ENCODE measurements at regions of chr9 and their contacts with region 1.

Region 1: DNA sequence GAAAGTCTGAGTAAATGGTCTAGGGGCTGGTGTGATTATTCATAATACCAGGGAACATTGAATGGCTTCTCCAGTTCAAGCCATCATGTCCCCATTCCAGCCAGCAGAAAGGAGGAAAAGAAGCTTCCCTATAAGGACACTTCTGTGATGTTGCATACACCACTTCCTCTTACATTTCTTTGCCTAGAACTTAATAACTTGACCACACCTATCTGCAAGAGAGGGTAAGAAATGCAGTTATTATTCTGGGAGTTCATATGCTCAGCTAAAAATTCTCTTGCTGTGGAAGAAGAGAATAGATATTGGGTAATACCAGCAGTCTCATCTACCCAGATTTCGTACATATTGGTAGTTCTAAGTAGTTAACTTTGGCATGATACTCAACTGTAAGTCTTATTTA is 166.1 kb downstream of the SLC28A3 start:
- DNase-seq: no peak
- H3K4me3 ChIP-seq: no peak overlapping the region
- CTCF ChIP-seq: no peak

Region 2: DNA sequence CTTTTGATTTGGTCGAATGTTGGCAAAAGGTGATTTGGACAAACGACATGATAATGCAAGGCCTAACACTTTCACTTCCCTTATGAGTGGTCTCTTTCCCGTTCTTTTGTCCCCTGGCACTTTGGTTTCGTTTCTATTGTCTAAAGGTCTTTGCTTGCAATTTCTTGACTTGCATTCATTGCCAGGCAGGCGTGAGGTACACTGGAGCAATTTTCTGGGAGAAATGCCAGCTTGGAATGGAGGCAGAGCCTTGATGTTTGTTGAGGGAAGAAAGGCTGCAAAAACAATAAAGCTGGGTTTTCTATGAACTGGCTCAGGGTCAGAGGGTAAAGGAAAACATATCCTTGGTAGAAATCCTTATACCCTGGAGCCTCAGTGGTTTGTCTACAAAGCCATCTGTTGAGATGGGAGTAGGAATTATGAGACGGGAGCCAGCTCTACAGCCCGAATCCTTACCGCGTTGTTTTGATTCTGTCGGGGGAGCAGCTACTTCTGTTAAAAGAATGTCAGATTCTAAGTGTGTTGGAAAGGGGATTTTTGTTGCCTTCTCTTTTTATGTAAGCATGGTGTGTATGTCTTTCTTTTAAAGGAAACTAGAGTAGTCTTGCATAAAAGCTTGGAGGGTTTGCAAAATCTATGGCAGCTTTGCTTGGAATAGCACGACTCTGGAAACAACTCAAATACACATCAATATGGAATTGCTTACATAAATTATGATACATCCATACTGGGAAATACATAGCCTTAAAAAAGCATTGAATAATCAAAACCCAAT is 35.0 kb before region 1 on chr9:
- CTCF ChIA-PET with region 1: interaction called, 13 read pairs
- POLR2A ChIA-PET with region 1: no interaction called
- DNase-seq: no peak
- H3K4me3 ChIP-seq: no peak overlapping the region
- CTCF ChIP-seq: no peak

Region 3: GRCh38 chr9:84146893-84147710 is 27.4 kb before region 1 on chr9:
- CTCF ChIA-PET with region 1: interaction called, 18 read pairs
- POLR2A ChIA-PET with region 1: no interaction called
- DNase-seq: no peak
- H3K4me3 ChIP-seq: no peak overlapping the region
- CTCF ChIP-seq: no peak

Region 4: GRCh38 chr9:84154320-84154719 is 20.2 kb before region 1 on chr9:
- CTCF ChIA-PET with region 1: interaction called, 20 read pairs
- POLR2A ChIA-PET with region 1: no interaction called
- DNase-seq: no peak
- H3K4me3 ChIP-seq: no peak overlapping the region
- CTCF ChIP-seq: no peak

Region 5: DNA sequence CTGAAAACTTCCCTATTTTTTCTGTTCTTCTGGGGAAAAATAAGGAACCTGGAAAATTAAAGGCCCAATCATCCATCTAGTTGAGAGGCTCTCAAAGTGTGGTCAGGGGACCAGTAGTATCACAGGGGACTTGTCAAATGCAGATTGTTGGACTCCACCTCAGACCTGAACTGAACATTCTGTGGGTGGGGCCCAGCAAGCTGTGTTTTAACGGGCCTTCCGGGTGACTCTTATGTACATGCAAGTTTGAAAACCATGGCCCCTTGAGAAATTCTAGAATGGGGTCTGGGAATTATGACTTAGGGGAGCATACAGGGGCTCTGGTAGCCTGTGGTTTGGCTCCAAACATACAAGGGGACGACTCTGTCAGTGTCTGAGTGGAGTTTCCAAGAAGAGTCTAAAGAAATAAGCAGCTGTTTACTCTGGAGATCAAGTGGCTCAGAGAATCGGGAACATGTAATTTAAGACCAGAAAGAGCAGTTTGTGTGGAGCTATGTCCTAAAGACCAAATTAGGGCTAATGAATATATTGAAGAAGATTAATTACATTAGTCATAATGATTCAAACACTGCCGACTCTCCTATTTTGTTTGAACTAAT is 11.3 kb before region 1 on chr9:
- CTCF ChIA-PET with region 1: interaction called, 33 read pairs
- POLR2A ChIA-PET with region 1: no interaction called
- DNase-seq: no peak
- H3K4me3 ChIP-seq: no peak overlapping the region
- CTCF ChIP-seq: no peak

Region 6: GRCh38 chr9:84187090-84187489 is 12.6 kb after region 1 on chr9:
- CTCF ChIA-PET with region 1: interaction called, 79 read pairs
- POLR2A ChIA-PET with region 1: interaction called, 4 read pairs
- DNase-seq: no peak
- H3K4me3 ChIP-seq: no peak overlapping the region
- CTCF ChIP-seq: no peak

Region 7: DNA sequence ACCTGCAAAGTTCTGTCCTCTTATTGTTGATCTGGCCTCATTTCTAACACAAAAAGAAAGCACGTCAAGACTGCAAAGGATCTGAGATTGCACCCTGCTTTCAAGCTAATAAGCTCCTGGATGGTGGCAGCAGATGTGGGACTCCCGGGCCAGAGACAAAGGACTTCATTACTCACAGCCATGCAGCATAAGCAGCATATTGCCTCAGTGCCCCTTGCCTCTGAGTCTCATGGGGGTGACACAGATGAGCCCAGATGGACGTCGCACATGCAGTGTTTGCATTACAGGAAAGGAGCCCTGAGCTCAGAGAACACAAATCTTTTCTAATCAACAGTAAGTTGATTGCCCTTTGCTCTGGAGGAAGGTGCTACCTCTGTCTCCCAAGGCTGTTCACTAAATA is 61.0 kb after region 1 on chr9:
- CTCF ChIA-PET with region 1: no interaction called
- POLR2A ChIA-PET with region 1: no interaction called
- DNase-seq: no peak
- H3K4me3 ChIP-seq: no peak overlapping the region
- CTCF ChIP-seq: no peak

Region 8: GRCh38 chr9:84368601-84369000 is 194.1 kb after region 1 on chr9:
- CTCF ChIA-PET with region 1: no interaction called
- POLR2A ChIA-PET with region 1: no interaction called
- DNase-seq: no peak
- H3K4me3 ChIP-seq: no peak overlapping the region
- CTCF ChIP-seq: no peak

Region 9: GRCh38 chr9:84379740-84380139 is 205.3 kb after region 1 on chr9:
- CTCF ChIA-PET with region 1: no interaction called
- POLR2A ChIA-PET with region 1: no interaction called
- DNase-seq: no peak
- H3K4me3 ChIP-seq: no peak overlapping the region
- CTCF ChIP-seq: no peak